Lower leg skin (tissue), 4 donors: ENCODE measurements at regions of chr14 and their contacts with region 1.

Region 1: GRCh38 chr14:22386924-22387775 is 201.9 kb downstream of the DAD1 start:
- DNase-seq: peak; percentile 78 to 89
- H3K4me3 ChIP-seq: no peak overlapping the region
- CTCF ChIP-seq: no peak
- POLR2A ChIP-seq: no peak

Region 2: GRCh38 chr14:21768116-21768874 is 618.9 kb before region 1 on chr14:
- intact Hi-C with region 1: no loop called
- DNase-seq: no peak
- H3K4me3 ChIP-seq: no peak overlapping the region
- CTCF ChIP-seq: no peak
- POLR2A ChIP-seq: no peak

Region 3: DNA sequence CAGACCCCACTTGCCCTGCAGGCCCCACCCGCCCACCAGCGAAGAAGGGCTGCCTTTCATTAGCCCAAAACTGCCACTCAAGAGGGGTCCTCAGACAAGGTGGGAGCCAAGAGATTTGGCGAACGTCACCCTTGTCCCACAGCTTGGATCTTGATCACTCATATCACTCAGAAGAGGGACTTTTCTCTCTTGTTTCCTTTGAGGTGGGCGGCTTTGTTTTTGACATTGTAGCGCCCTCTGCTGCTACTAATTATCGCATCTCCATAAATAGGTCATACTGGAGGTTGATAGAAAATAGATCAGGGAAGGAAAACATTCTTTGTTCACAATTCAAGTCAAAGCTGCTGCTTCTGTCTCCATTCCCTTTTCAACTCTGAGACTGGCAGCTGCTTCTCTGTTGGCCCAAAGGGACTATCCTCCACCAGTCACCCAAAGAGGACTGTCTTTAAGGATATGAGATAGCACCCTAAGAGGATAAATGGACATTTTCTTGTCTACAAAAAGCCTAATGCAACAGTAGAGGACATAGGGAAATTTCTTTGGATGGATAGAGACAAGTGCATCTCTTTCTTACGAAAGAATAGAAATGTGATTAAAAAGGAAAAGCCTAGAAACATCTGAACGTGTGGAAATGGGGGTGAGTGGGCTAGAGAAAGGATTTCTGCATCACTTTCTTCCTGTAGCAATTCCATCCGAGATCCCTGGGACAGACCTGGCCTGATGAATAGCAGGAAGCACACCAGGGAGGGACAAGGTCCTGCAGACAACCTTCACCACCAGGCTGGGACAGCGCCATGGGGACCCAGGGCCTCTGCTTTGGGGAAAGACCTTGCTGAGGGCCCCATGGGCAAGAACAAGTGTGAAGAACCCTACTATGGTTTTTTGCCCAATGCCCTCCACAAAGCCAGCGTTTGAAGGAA is 86.0 kb after region 1 on chr14:
- intact Hi-C with region 1: loop called (anchors 1 kb)
- DNase-seq: no peak
- H3K4me3 ChIP-seq: no peak overlapping the region
- CTCF ChIP-seq: no peak
- POLR2A ChIP-seq: no peak

Region 4: DNA sequence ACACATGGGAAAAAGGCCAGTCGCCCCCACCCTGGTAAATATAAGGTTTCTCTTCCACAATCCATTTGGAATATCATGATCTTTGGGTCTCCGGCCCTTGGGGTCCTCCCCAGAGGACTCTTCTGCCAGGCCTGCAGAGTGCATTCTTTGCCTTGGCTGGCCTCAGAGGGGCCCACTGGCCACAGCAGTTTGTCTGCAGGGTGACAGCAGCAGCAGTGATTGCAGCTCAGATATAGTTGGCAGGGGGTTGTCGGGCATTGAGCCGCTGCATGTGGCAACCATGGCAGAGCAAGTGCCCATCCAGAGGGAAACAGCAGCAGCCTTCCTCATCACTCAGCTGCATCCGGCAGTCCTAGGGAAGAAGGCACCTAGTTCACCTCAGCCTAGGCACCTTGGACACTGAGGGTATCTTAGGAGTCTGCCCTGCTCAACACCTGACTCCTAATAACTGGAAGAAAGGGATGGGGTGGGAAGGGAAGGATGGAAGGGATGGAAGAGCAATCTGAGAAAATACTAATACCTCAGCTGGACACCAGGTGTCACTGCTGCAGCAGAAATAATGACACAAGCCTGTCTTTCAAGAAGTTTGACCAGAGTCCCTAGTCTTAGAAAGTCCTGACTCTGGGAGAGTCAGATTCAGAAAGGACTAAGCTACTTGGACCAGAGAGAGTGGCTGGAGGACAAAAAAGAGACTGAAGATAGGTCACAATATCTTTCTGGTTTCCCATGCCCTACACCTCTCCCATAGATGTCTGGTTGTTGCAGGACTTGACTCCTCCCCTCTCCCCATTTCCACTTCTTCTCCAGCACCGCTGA is 586.3 kb after region 1 on chr14:
- intact Hi-C with region 1: no loop called
- DNase-seq: peak in 1 of 2 donors; percentile 45
- H3K4me3 ChIP-seq: no peak overlapping the region
- CTCF ChIP-seq: no peak
- POLR2A ChIP-seq: no peak